ENCODE measurements at regions of chr16 and their contacts with region 1.

Region 1: DNA sequence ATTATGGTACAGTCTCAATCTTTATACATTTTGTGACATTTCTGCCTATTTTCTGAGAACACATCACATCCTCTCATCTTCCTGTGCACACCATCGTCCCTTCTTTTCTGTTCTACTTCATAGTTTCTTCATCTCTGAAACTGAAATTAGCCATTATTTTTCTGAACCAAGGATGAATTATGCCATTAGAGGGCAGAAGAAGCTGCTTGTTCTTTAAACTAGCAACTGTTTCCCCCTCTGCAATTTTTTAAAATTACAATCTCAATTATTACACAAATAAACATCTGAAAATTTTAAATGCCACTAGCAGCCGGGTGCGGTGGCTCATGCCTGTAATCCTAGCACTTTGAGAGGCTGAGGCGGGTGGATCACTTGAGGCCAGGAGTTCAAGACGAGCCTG is 41.3 kb downstream of the RBBP6 start:
- DNase-seq: no peak
- ATAC-seq: no peak
- H3K4me3 ChIP-seq: no peak overlapping the region
- H3K27ac ChIP-seq: no peak overlapping the region
- H3K4me1 ChIP-seq: peaks cover 0 to 6% (median 0%) of the 10 kb centered on the region in 9 donors
- H3K27me3 ChIP-seq: no peaks in the 10 kb centered on the region
- CTCF ChIP-seq: peak in 6 of 9 donors; percentile 33 to 58 (median 52)

Region 2: GRCh38 chr16:24508614-24509013 is 72.1 kb before region 1 on chr16:
- intact Hi-C with region 1: no loop called
- DNase-seq: no peak
- ATAC-seq: no peak
- H3K4me3 ChIP-seq: no peak overlapping the region
- H3K27ac ChIP-seq: no peak overlapping the region
- H3K4me1 ChIP-seq: no peaks in the 10 kb centered on the region
- H3K27me3 ChIP-seq: peaks cover 0 to 24% (median 11%) of the 10 kb centered on the region in 7 donors
- CTCF ChIP-seq: no peak

Region 3: DNA sequence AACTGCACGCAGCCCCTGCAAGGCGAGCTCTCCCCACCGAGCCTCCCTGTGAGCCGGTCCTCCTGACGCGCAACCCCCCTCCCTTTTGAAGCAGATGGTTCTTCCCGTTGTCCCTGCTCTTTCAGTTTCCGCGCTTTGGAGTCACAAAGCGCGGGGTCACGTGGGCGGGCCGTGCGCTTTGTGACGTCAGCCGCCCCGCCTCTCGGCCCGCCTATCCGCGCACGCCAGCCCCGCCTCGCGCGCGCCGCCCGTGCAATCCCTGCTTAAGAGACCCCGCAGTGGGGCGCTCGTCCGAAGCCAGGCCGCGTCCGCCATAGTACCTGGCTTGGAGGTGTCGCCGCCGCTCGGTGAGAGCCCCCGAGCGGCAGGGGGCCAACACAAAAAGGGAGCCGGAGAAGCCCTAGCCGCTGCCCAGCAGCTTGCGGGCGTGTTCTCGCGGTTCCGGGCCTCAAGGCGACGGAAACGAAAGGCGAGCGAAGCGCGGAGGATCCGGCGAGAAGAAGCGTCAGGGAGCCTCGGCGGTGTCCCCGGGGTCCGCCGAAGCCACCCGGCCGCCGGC is 41.3 kb before region 1 on chr16 and contains the start of gene RBBP6:
- intact Hi-C with region 1: no loop called
- DNase-seq: peak; percentile 93 to 95
- ATAC-seq: peak; percentile 95 to 98 (median 97)
- H3K4me3 ChIP-seq: peak within 1 kb of the TSS; percentile 61 to 97 (median 82)
- H3K27ac ChIP-seq: peak within 1 kb of the TSS; percentile 95 to 100 (median 100)
- H3K4me1 ChIP-seq: peaks cover 3 to 35% (median 29%) of the 10 kb centered on the region in 9 donors
- H3K27me3 ChIP-seq: no peaks in the 10 kb centered on the region
- CTCF ChIP-seq: peak; percentile 7 to 57 (median 39)
- total RNA-seq, gene RBBP6: 26.8 to 50.3 (median 33.1) TPM

Region 4: GRCh38 chr16:24626256-24626655 is 45.6 kb after region 1 on chr16:
- intact Hi-C with region 1: no loop called
- DNase-seq: no peak
- ATAC-seq: no peak
- H3K4me3 ChIP-seq: no peak overlapping the region
- H3K27ac ChIP-seq: no peak overlapping the region
- H3K4me1 ChIP-seq: no peaks in the 10 kb centered on the region
- H3K27me3 ChIP-seq: no peaks in the 10 kb centered on the region
- CTCF ChIP-seq: no peak

Region 5: GRCh38 chr16:24689145-24689544 is 108.5 kb after region 1 on chr16:
- intact Hi-C with region 1: loop called in 4 of 10 experiments (anchors 5 to 10 kb)
- DNase-seq: no peak
- ATAC-seq: peak in 4 of 8 donors; percentile 37 to 72 (median 56)
- H3K4me3 ChIP-seq: no peak overlapping the region
- H3K27ac ChIP-seq: no peak overlapping the region
- H3K4me1 ChIP-seq: peaks cover 0 to 16% (median 8%) of the 10 kb centered on the region in 9 donors
- H3K27me3 ChIP-seq: no peaks in the 10 kb centered on the region
- CTCF ChIP-seq: peak; percentile 18 to 69 (median 55)

Region 6: GRCh38 chr16:24800586-24800985 is 219.9 kb after region 1 on chr16:
- intact Hi-C with region 1: loop called in 1 of 10 experiments (anchors 10 kb)
- DNase-seq: no peak
- ATAC-seq: peak in 6 of 8 donors; percentile 37 to 62 (median 50)
- H3K4me3 ChIP-seq: no peak overlapping the region
- H3K27ac ChIP-seq: no peak overlapping the region
- H3K4me1 ChIP-seq: no peaks in the 10 kb centered on the region
- H3K27me3 ChIP-seq: no peaks in the 10 kb centered on the region
- CTCF ChIP-seq: peak in 7 of 9 donors; percentile 11 to 40 (median 31)